ENCODE measurements at regions of chr15 and their contacts with region 1.

Region 1: GRCh38 chr15:57626713-57627440 is 35.2 kb downstream of the MYZAP start:
- DNase-seq: no peak
- ATAC-seq: no peak
- H3K4me3 Mint-ChIP-seq: no peak overlapping the region
- H3K27ac Mint-ChIP-seq: no peak overlapping the region
- H3K4me1 Mint-ChIP-seq: no peaks in the 10 kb centered on the region
- H3K27me3 Mint-ChIP-seq: peaks cover 2% of the 10 kb centered on the region

Region 2: DNA sequence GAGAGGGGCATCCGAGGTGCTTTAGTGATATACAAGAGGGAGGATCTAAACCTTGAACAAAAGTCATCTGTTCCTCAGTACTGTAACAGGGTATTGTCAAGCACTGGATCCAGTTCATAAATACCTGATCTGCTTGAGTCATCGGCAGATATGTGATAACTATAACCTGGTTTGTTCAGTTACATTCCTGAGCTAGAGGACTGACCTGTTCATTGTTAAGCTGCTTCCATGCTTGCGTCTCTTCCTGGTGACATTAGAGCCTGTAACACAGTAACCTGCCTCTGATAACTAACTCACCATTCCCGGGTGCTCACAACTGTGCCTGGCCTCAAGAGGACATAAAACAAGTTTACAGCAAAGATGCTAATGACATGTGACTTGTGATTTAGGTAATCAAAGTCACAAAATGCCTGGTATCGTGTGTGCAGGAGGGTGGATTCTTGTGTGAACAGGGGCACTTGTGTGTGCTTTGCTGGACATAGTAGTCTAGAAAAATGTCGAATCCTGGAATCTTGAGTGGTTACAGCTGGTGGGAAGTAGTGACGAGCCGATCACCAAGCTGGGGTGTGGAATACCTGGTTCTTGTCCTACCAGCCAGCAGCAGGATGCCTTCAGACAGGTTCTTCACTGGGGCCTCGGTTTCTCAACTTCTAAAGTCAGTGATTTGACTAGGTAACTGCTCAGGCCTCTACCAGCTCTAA is 48.8 kb after region 1 on chr15:
- CTCF ChIA-PET with region 1: no interaction called
- POLR2A ChIA-PET with region 1: no interaction called
- intact Hi-C with region 1: loop called in 1 of 2 experiments (anchors 2 kb)
- DNase-seq: no peak
- ATAC-seq: no peak
- H3K4me3 Mint-ChIP-seq: no peak overlapping the region
- H3K27ac Mint-ChIP-seq: no peak overlapping the region
- H3K4me1 Mint-ChIP-seq: peaks cover 7% of the 10 kb centered on the region
- H3K27me3 Mint-ChIP-seq: peaks cover 5% of the 10 kb centered on the region

Measured in activated CD4-positive, alpha-beta T cell treated with anti-CD3 and anti-CD28 coated beads for 36 hours (primary cell).